Posterior vena cava (tissue), 2 donors: ENCODE measurements at regions of chr1 and their contacts with region 1.

Region 1: GRCh38 chr1:4820543-4820942 is 166.1 kb downstream of the AJAP1 start:
- DNase-seq: no peak

Region 2: DNA sequence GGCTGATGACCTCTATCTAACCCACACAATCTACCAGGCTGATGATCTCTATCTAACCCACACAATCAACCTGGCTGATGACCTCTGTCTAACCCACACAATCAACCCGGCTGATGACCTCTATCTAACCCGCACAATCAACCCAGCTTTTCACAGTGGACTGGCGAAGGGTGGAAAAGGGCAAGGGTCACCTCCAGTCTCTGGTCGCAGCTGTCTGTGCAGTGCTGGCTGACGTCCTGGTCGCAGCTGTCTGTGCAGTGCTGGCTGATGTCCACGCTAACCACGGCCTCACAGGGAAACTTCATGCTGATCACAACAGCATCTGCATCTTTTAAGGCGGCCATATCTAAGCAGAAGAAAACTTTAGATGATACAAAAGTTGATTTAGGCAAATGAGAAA is 1080.5 kb before region 1 on chr1:
- intact Hi-C with region 1: no loop called
- DNase-seq: no peak

Region 3: DNA sequence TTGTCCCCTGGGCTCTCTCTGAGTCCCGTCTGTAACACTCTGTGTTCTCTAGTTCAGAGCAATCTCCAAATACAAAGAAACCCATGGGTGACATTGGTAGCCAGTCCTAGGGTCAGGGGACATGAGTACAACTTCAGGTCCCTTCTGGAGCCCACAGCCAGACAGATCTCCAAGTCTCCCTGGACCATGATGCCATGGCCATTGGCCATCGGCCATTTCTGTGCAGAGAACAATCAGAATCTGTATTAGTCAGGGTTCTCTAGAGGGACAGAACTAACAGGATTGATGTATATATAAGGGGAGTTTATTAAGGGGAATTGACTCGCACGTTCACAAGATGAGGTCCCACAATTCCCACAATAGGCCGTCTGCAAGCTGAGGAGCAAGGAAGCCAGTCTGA is 59.2 kb before region 1 on chr1:
- intact Hi-C with region 1: no loop called
- DNase-seq: no peak

Region 4: GRCh38 chr1:4796161-4797015 is 24.2 kb before region 1 on chr1:
- intact Hi-C with region 1: loop called in 1 of 2 experiments (anchors 1 kb)
- DNase-seq: no peak

Region 5: DNA sequence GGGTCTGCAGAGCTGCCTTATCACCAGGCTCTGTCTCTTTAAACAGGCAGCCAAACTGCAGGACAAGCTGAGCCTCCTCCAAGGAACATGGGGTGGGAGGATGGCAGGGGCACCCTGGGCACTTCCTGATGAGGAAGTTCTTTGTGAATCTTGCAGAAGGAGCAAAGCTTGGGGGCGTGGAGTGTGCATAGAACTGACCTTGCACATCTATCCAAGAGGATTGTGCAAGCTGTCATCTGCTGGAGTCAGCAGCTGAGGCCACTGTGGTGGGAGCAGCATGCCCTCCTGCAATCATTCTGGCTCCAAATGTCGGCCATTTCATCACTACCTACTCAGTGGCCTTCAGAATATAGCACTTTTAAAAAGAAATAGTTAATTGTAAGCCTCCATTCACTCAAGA is 16.0 kb after region 1 on chr1:
- intact Hi-C with region 1: no loop called
- DNase-seq: no peak

Region 6: GRCh38 chr1:4851385-4852065 is 31.0 kb after region 1 on chr1:
- intact Hi-C with region 1: no loop called
- DNase-seq: no peak